Cardiac septum (tissue), 1 donor: ENCODE measurements at regions of chr3 and their contacts with region 1.

Region 1: GRCh38 chr3:113912552-113913236 is 35.1 kb upstream of the ZDHHC23 start:
- DNase-seq: no peak

Region 2: DNA sequence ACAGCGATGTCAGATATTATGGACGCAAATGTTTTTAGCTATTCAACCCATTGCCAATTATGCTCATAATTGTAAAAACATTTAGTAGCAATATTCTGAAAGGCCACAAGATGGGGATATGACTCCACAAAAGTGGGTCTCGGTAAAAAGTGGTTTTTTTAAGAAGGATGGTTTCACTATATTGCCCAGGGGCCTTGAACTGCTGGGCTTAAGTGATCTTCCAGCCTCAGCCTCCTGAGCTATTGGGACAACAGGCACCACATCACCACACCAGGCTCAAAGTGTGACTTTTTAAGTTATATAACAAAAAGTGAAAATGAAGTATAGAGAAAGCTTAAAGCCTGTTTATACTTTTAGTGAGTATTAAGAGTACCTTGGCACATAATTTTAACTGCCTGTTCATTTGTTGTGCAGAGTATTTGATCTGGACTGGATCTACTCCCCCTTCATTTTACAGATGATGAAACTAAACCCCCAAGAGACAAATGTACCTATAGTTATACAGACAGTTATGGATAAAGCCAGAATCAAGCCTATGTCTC is 176.1 kb before region 1 on chr3:
- intact Hi-C with region 1: loop called (anchors 10 kb)
- DNase-seq: no peak

Region 3: GRCh38 chr3:113773381-113773780 is 139.3 kb before region 1 on chr3:
- intact Hi-C with region 1: no loop called
- DNase-seq: no peak